ENCODE measurements at regions of chr2 and their contacts with region 1.

Region 1: GRCh38 chr2:227238238-227239237 is 74.1 kb downstream of the COL4A3 start:
- DNase-seq: peak; percentile 62
- H3K4me3 Mint-ChIP-seq: no peak overlapping the region
- H3K27ac Mint-ChIP-seq: no peak overlapping the region
- H3K4me1 Mint-ChIP-seq: no peaks in the 10 kb centered on the region
- H3K27me3 Mint-ChIP-seq: peaks cover 11% of the 10 kb centered on the region

Region 2: DNA sequence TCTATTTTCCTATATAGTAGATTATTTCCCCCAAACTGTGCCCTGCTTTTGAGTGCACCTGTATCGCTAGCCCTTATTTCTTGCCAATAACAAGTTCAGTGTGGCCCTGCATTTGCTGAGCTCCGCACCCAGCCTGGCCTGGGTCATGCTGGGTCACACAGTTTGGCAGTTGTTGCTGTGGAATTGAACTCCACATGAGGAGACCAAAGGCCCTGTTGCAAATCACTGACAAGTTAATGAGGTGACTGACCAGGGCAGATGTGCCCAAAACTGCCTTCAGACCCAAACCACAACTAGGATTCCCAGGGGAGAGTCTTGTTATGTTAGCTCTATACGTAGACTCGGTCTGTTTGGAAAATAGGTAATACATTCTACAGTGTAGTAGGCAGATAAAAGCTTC is 105.6 kb before region 1 on chr2:
- CTCF ChIA-PET with region 1: interaction called, 67 read pairs
- POLR2A ChIA-PET with region 1: no interaction called
- DNase-seq: no peak
- H3K4me3 Mint-ChIP-seq: no peak overlapping the region
- H3K27ac Mint-ChIP-seq: no peak overlapping the region
- H3K4me1 Mint-ChIP-seq: no peaks in the 10 kb centered on the region
- H3K27me3 Mint-ChIP-seq: peaks cover 16% of the 10 kb centered on the region

Region 3: GRCh38 chr2:227228061-227228667 is 10.4 kb before region 1 on chr2:
- CTCF ChIA-PET with region 1: interaction called, 10 read pairs
- POLR2A ChIA-PET with region 1: no interaction called
- DNase-seq: no peak
- H3K4me3 Mint-ChIP-seq: no peak overlapping the region
- H3K27ac Mint-ChIP-seq: no peak overlapping the region
- H3K4me1 Mint-ChIP-seq: no peaks in the 10 kb centered on the region
- H3K27me3 Mint-ChIP-seq: peaks cover 8% of the 10 kb centered on the region

Region 4: GRCh38 chr2:227248876-227249275 is 10.3 kb after region 1 on chr2:
- CTCF ChIA-PET with region 1: interaction called, 12 read pairs
- POLR2A ChIA-PET with region 1: no interaction called
- DNase-seq: no peak
- H3K4me3 Mint-ChIP-seq: no peak overlapping the region
- H3K27ac Mint-ChIP-seq: no peak overlapping the region
- H3K4me1 Mint-ChIP-seq: no peaks in the 10 kb centered on the region
- H3K27me3 Mint-ChIP-seq: peaks cover 7% of the 10 kb centered on the region

Measured in activated CD4-positive, alpha-beta memory T cell treated with anti-CD3 and anti-CD28 coated beads, Interleukin-2, amount 10 ng/mL, durations not matched to agents 7 days and 5 days (primary cell).